ENCODE measurements at regions of chr11 and their contacts with region 1.

Region 1: DNA sequence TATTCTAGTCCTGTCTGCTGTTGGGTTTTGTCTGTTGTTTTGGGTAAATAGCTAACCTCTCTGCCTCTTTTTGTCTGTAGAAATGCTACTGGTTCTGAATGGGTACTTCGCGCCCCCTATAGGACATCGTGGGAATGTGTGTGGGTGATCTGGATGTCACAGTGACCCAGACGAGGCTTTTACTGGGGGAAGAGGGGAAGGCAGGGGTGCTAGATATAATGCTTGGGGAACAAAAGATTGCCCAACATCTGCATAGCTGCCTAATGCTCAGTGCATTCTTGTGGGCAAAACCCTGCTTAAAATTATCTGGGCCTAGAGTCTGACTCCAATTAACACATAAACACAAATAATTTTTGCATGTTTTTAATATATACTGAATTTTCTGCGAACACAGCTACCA is 57.7 kb downstream of the BMAL1 start:
- DNase-seq: peak; percentile 19 to 75 (median 67)
- ATAC-seq: peak; percentile 84
- H3K4me3 ChIP-seq: no peak overlapping the region
- H3K4me3 Mint-ChIP-seq: no peak overlapping the region
- H3K27ac ChIP-seq: no peak overlapping the region
- H3K27ac Mint-ChIP-seq: peak overlapping the region in 4 of 9 donors; percentile 0 to 19 (median 2)
- H3K4me1 ChIP-seq: peaks cover 21 to 37% of the 10 kb centered on the region in 2 donors
- H3K4me1 Mint-ChIP-seq: peaks cover 40 to 84% (median 81%) of the 10 kb centered on the region in 7 donors
- H3K27me3 ChIP-seq: no peaks in the 10 kb centered on the region
- H3K27me3 Mint-ChIP-seq: no peaks in the 10 kb centered on the region

Region 2: GRCh38 chr11:13183094-13183825 is 152.1 kb before region 1 on chr11:
- CTCF ChIA-PET with region 1: interaction called, 12 read pairs
- POLR2A ChIA-PET with region 1: no interaction called
- intact Hi-C with region 1: loop called (anchors 1 to 2 kb)
- DNase-seq: peak in 4 of 9 donors; percentile 3 to 15 (median 12)
- ATAC-seq: peak; percentile 62
- H3K4me3 ChIP-seq: no peak overlapping the region
- H3K4me3 Mint-ChIP-seq: peak overlapping the region in 8 of 10 donors; percentile 10 to 58 (median 36)
- H3K27ac ChIP-seq: no peak overlapping the region
- H3K27ac Mint-ChIP-seq: no peak overlapping the region
- H3K4me1 ChIP-seq: no peaks in the 10 kb centered on the region
- H3K4me1 Mint-ChIP-seq: peaks cover 0 to 9% (median 6%) of the 10 kb centered on the region in 7 donors
- H3K27me3 ChIP-seq: no peaks in the 10 kb centered on the region
- H3K27me3 Mint-ChIP-seq: peaks cover 5 to 16% (median 9%) of the 10 kb centered on the region in 5 donors

Region 3: DNA sequence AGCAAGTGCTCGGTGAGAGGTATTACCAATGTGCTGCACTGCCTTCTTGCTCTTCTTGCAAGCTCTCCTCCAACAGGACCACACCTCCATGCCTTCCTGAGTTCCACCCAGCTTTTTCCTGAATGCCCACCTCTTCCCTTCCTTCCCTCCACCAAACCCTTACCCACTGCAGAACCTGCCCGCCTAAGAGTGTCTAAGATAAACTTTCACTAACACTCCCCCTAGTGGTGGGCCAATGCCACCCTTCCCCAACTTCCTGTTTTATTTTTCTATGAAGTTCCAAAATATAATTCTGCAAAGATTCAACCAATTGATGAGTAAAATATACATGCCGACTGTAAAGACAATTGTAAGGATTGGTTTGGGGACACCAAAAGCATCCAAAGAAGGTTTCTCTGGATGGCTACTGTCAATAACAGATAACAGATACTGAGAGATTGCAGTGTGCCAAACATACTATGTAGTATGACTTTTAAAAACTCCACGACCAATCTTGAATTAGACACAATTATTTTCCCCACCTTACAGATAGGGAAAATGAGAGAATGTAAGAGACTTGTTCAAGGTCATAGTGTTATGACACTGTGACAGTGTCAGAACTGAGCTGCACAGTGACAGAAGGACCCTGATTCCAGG is 96.3 kb before region 1 on chr11:
- CTCF ChIA-PET with region 1: interaction called, 3 read pairs
- POLR2A ChIA-PET with region 1: no interaction called
- intact Hi-C with region 1: loop called (anchors 1 kb)
- DNase-seq: peak; percentile 11 to 59 (median 43)
- ATAC-seq: peak; percentile 84
- H3K4me3 ChIP-seq: no peak overlapping the region
- H3K4me3 Mint-ChIP-seq: no peak overlapping the region
- H3K27ac ChIP-seq: no peak overlapping the region
- H3K27ac Mint-ChIP-seq: no peak overlapping the region
- H3K4me1 ChIP-seq: no peaks in the 10 kb centered on the region
- H3K4me1 Mint-ChIP-seq: peaks cover 0 to 5% (median 0%) of the 10 kb centered on the region in 7 donors
- H3K27me3 ChIP-seq: no peaks in the 10 kb centered on the region
- H3K27me3 Mint-ChIP-seq: peaks cover 0 to 45% (median 15%) of the 10 kb centered on the region in 5 donors

Region 4: GRCh38 chr11:13276832-13277767 is 58.2 kb before region 1 on chr11:
- CTCF ChIA-PET with region 1: interaction called, 6 read pairs
- POLR2A ChIA-PET with region 1: interaction called, 3 read pairs
- intact Hi-C with region 1: loop called (anchors 1 kb)
- DNase-seq: peak; percentile 93 to 97 (median 96)
- ATAC-seq: peak; percentile 91
- H3K4me3 ChIP-seq: peak overlapping the region; percentile 80
- H3K4me3 Mint-ChIP-seq: peak overlapping the region; percentile 95 to 99 (median 97)
- H3K27ac ChIP-seq: peak overlapping the region; percentile 81
- H3K27ac Mint-ChIP-seq: peak overlapping the region; percentile 72 to 97 (median 91)
- H3K4me1 ChIP-seq: peaks cover 19 to 29% of the 10 kb centered on the region in 2 donors
- H3K4me1 Mint-ChIP-seq: peaks cover 32 to 47% (median 40%) of the 10 kb centered on the region in 7 donors
- H3K27me3 ChIP-seq: no peaks in the 10 kb centered on the region
- H3K27me3 Mint-ChIP-seq: peaks cover 0 to 51% (median 0%) of the 10 kb centered on the region in 5 donors

Region 5: DNA sequence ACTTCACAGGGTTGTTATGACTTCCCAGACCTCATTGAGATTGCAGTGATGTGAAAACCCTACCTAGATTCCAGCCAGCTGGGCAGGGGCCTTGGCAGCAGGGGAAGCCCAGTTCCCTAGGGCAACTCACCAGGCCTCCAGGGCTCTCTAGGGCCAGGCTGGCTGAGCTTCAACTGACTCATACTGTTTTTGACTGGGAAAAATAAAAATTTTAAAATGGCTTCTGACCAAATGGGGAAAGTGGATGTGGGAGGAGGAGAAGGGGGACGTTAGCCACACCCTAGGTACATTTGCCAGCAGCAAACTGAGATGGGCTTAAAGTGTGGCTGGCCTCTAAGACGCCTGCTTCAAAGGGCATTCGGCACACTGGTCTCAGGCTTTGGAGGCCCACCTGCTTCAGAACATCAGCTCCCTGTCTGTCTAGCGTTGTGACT is 18.8 kb before region 1 on chr11:
- CTCF ChIA-PET with region 1: interaction called, 5 read pairs
- POLR2A ChIA-PET with region 1: no interaction called
- intact Hi-C with region 1: loop called (anchors 1 to 2 kb)
- DNase-seq: no peak
- ATAC-seq: no peak
- H3K4me3 ChIP-seq: no peak overlapping the region
- H3K4me3 Mint-ChIP-seq: peak overlapping the region in 3 of 10 donors; percentile 1 to 18 (median 4)
- H3K27ac ChIP-seq: no peak overlapping the region
- H3K27ac Mint-ChIP-seq: peak overlapping the region in 3 of 9 donors; percentile 14 to 51 (median 28)
- H3K4me1 ChIP-seq: peaks cover 20 to 21% of the 10 kb centered on the region in 2 donors
- H3K4me1 Mint-ChIP-seq: peaks cover 36 to 93% (median 87%) of the 10 kb centered on the region in 7 donors
- H3K27me3 ChIP-seq: no peaks in the 10 kb centered on the region
- H3K27me3 Mint-ChIP-seq: no peaks in the 10 kb centered on the region

Region 6: GRCh38 chr11:13368041-13368446 is 32.7 kb after region 1 on chr11:
- CTCF ChIA-PET with region 1: no interaction called
- POLR2A ChIA-PET with region 1: no interaction called
- intact Hi-C with region 1: no loop called
- DNase-seq: no peak
- ATAC-seq: no peak
- H3K4me3 ChIP-seq: no peak overlapping the region
- H3K4me3 Mint-ChIP-seq: no peak overlapping the region
- H3K27ac ChIP-seq: no peak overlapping the region
- H3K27ac Mint-ChIP-seq: peak overlapping the region in 5 of 9 donors; percentile 4 to 74 (median 19)
- H3K4me1 ChIP-seq: no peaks in the 10 kb centered on the region
- H3K4me1 Mint-ChIP-seq: peaks cover 0 to 1% (median 0%) of the 10 kb centered on the region in 7 donors
- H3K27me3 ChIP-seq: no peaks in the 10 kb centered on the region
- H3K27me3 Mint-ChIP-seq: no peaks in the 10 kb centered on the region

Measured in naive thymus-derived CD4-positive, alpha-beta T cell (primary cell).